ENCODE measurements at regions of chr10 and their contacts with region 1.

Region 1: GRCh38 chr10:89414146-89414878 is at the start of gene IFIT5:
- DNase-seq: peak; percentile 70
- ATAC-seq: peak; percentile 72
- H3K4me3 Mint-ChIP-seq: peak within 1 kb of the TSS; percentile 94
- H3K27ac Mint-ChIP-seq: peak within 1 kb of the TSS; percentile 99
- H3K4me1 Mint-ChIP-seq: peaks cover 46% of the 10 kb centered on the region
- H3K27me3 Mint-ChIP-seq: no peaks in the 10 kb centered on the region
- CTCF ChIP-seq: no peak
- total RNA-seq, gene IFIT5: 20.0 and 21.3 TPM in 2 replicates

Region 2: GRCh38 chr10:88990384-88991160 is 423.7 kb before region 1 on chr10 and contains the start of gene FAS:
- CTCF ChIA-PET with region 1: no interaction called
- POLR2A ChIA-PET with region 1: no interaction called
- intact Hi-C with region 1: loop called (anchors 5 kb)
- DNase-seq: peak; percentile 56
- ATAC-seq: peak; percentile 75
- H3K4me3 Mint-ChIP-seq: peak within 1 kb of the TSS; percentile 95
- H3K27ac Mint-ChIP-seq: peak within 1 kb of the TSS; percentile 88
- H3K4me1 Mint-ChIP-seq: peaks cover 53% of the 10 kb centered on the region
- H3K27me3 Mint-ChIP-seq: no peaks in the 10 kb centered on the region
- CTCF ChIP-seq: no peak
- total RNA-seq, gene FAS: 18.2 and 22.6 TPM in 2 replicates

Region 3: DNA sequence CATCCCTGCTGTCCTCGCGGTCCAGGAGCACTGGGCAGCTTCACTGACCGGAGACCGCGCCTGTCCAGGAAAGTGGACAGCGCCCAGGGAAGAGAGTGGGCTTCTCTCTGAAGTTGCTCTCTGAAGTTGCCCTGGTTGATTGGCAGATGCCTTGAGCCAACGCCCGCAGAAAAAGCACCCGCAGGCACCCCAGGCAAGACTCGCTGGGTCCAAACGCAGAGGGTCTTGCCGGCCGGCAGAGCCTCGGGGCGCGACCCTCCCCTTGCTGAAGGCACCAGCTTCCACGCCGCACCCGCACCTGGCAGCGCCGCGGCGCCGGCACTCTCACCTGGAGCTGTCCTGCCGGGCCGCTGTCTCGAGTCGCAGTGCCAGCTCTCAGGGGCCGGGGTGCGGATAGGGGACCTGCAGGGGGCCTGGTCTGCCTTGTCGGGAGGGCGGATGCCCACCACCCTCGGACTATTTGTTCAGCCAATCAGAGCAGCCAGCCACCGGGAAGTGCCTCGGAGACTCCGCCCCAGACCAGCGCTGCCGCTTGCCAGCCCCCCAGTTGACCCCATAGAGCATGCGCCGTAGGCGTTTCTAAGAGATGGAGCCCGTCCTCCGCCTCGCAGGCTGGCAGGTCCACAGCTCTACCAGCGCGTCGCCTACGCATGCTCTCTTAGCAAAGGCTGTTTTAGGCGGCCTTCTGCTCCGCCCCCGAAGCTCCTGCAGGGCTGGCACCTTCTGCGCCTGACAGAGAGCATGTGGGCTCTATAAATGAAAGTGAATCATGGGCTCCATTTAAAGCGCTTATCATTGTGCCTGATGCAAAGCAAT is 162.7 kb before region 1 on chr10 and contains the start of gene LIPA:
- CTCF ChIA-PET with region 1: interaction called, 4 read pairs
- POLR2A ChIA-PET with region 1: interaction called, 11 read pairs
- intact Hi-C with region 1: loop called (anchors 1 kb)
- DNase-seq: peak; percentile 90
- ATAC-seq: peak; percentile 93
- H3K4me3 Mint-ChIP-seq: peak within 1 kb of the TSS; percentile 91
- H3K27ac Mint-ChIP-seq: peak within 1 kb of the TSS; percentile 79
- H3K4me1 Mint-ChIP-seq: peaks cover 26% of the 10 kb centered on the region
- H3K27me3 Mint-ChIP-seq: peaks cover 3% of the 10 kb centered on the region
- CTCF ChIP-seq: no peak
- total RNA-seq, gene LIPA: 32.8 and 35.3 TPM in 2 replicates

Region 4: DNA sequence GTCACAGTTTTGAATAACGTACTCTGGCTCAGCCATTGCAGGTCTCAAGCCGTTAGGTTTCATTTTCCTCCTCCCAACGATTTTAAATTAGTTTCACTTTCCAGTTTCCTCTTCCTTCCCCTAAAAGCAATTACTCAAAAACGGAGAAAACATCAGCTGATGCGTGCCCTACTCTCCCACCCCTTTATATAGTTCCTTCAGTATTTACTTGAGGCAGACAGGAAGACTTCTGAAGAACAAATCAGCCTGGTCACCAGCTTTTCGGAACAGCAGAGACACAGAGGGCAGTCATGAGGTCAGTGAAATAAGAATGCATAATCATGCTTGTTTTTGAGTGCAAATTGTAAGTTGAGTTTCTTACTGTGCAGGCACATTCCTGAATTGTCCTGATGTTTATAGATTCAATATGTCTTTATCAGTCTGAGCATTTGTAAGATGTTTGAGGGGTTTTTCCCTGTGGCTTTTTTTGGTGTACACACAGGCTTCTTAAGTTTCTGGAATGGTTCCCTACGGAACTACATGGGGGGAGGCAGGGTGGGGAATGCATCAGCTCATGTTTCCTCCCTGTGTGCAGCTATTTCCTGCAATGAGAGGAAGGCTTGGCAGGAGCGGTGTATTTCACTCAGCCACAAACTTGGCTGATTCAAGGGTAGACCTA is 86.4 kb before region 1 on chr10 and contains the start of gene IFIT3:
- CTCF ChIA-PET with region 1: interaction called, 3 read pairs
- POLR2A ChIA-PET with region 1: interaction called, 6 read pairs
- intact Hi-C with region 1: loop called (anchors 1 kb)
- DNase-seq: no peak
- ATAC-seq: peak; percentile 22
- H3K4me3 Mint-ChIP-seq: peak within 1 kb of the TSS; percentile 86
- H3K27ac Mint-ChIP-seq: peak within 1 kb of the TSS; percentile 90
- H3K4me1 Mint-ChIP-seq: peaks cover 57% of the 10 kb centered on the region
- H3K27me3 Mint-ChIP-seq: no peaks in the 10 kb centered on the region
- CTCF ChIP-seq: no peak
- total RNA-seq, gene IFIT3: 3.2 TPM in 2 replicates

Region 5: DNA sequence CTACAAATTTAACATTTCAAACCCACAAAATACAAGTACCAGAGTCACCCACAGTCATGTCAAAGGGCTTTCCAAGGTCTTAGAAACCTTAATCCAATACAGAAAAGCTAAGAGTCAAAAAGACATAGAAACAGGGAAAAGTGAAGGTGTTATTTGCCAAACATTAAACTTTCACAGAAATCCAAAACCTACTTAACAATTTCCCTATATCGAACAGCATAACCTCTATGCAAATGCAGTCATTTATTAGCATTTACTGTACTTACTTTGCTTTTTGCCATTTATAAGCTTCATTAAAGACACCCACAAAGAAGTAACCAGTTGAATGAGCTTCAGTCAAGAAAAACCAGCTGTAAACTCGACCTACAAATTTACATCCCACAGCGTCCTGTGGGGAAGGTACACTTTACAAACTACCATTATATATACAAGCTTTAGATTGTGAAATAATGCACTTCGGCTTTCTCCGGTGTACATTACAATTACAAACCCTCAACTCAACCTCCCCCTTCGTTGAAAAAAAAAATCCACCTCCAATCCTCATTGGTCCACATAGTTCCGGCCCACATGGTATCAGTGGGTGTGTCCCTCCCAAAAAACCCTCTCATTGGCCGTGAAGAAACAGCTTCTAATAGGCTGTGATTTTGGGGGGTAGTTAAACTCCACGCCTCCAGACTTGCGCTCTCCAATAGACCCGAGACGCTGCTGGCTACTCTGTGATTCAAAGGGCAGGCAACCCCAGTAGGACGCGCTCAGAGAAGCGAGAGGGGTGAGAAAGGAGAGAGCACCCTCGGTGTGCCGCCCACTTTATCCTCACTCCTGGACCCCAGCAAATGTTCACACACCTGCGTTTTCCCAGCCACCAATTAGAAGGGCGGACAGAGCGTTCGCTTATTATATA is 229.4 kb after region 1 on chr10:
- CTCF ChIA-PET with region 1: no interaction called
- POLR2A ChIA-PET with region 1: interaction called, 5 read pairs
- intact Hi-C with region 1: loop called (anchors 2 kb)
- DNase-seq: peak; percentile 46
- ATAC-seq: peak; percentile 91
- H3K4me3 Mint-ChIP-seq: no peak overlapping the region
- H3K27ac Mint-ChIP-seq: no peak overlapping the region
- H3K4me1 Mint-ChIP-seq: peaks cover 13% of the 10 kb centered on the region
- H3K27me3 Mint-ChIP-seq: no peaks in the 10 kb centered on the region
- CTCF ChIP-seq: no peak

Region 6: GRCh38 chr10:90047243-90047729 is 633.0 kb after region 1 on chr10:
- CTCF ChIA-PET with region 1: no interaction called
- POLR2A ChIA-PET with region 1: interaction called, 3 read pairs
- intact Hi-C with region 1: loop called (anchors 10 kb)
- DNase-seq: no peak
- ATAC-seq: peak; percentile 82
- H3K4me3 Mint-ChIP-seq: peak overlapping the region; percentile 68
- H3K27ac Mint-ChIP-seq: peak overlapping the region; percentile 94
- H3K4me1 Mint-ChIP-seq: peaks cover 44% of the 10 kb centered on the region
- H3K27me3 Mint-ChIP-seq: no peaks in the 10 kb centered on the region
- CTCF ChIP-seq: no peak